Activated B cell treated with CpG ODN at 0.5 μM for 24 hours (primary cell): ENCODE measurements at regions of chr11 and their contacts with region 1.

Region 1: GRCh38 chr11:12043959-12044819 is 35.8 kb upstream of the DKK3 start:
- DNase-seq: peak; percentile 34
- ATAC-seq: peak; percentile 66
- H3K4me3 Mint-ChIP-seq: no peak overlapping the region
- H3K27ac Mint-ChIP-seq: no peak overlapping the region
- H3K4me1 Mint-ChIP-seq: no peaks in the 10 kb centered on the region
- H3K27me3 Mint-ChIP-seq: peaks cover 6% of the 10 kb centered on the region
- CTCF ChIP-seq: peak; percentile 65

Region 2: GRCh38 chr11:12235947-12236743 is 192.0 kb after region 1 on chr11:
- CTCF ChIA-PET with region 1: interaction called, 19 read pairs
- POLR2A ChIA-PET with region 1: no interaction called
- intact Hi-C with region 1: no loop called
- DNase-seq: no peak
- ATAC-seq: no peak
- H3K4me3 Mint-ChIP-seq: no peak overlapping the region
- H3K27ac Mint-ChIP-seq: no peak overlapping the region
- H3K4me1 Mint-ChIP-seq: peaks cover 8% of the 10 kb centered on the region
- H3K27me3 Mint-ChIP-seq: peaks cover 9% of the 10 kb centered on the region
- CTCF ChIP-seq: peak; percentile 40

Region 3: DNA sequence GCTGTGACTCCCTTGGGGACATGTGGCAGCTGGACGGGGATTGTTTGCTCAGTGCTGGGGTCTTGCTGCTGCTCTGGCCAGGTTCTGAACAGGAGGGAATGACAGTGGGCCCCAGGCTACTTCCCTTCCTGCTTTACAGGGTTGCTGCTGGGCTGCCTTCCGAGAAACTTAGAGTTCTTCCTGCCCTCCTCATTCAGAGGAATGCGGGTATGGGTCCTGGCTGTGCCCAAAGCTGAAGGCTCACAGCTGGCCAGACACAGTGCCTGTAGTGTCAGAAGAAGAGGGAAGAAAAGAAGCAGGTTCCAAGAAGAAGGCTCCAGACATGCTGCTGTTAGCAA is 224.9 kb after region 1 on chr11:
- CTCF ChIA-PET with region 1: no interaction called
- POLR2A ChIA-PET with region 1: no interaction called
- intact Hi-C with region 1: no loop called
- DNase-seq: no peak
- ATAC-seq: no peak
- H3K4me3 Mint-ChIP-seq: no peak overlapping the region
- H3K27ac Mint-ChIP-seq: no peak overlapping the region
- H3K4me1 Mint-ChIP-seq: no peaks in the 10 kb centered on the region
- H3K27me3 Mint-ChIP-seq: peaks cover 5% of the 10 kb centered on the region
- CTCF ChIP-seq: no peak

Region 4: GRCh38 chr11:12281571-12282478 is 237.6 kb after region 1 on chr11:
- CTCF ChIA-PET with region 1: interaction called, 9 read pairs
- POLR2A ChIA-PET with region 1: no interaction called
- intact Hi-C with region 1: loop called (anchors 1 kb)
- DNase-seq: peak; percentile 45
- ATAC-seq: peak; percentile 57
- H3K4me3 Mint-ChIP-seq: no peak overlapping the region
- H3K27ac Mint-ChIP-seq: no peak overlapping the region
- H3K4me1 Mint-ChIP-seq: no peaks in the 10 kb centered on the region
- H3K27me3 Mint-ChIP-seq: peaks cover 7% of the 10 kb centered on the region
- CTCF ChIP-seq: peak; percentile 89